Activated CD8-positive, alpha-beta T cell treated with anti-CD3 and anti-CD28 coated beads, Interleukin-2, amount 10 ng/mL, durations not matched to agents 7 days and 5 days (primary cell): ENCODE measurements at regions of chr4 and their contacts with region 1.

Region 1: GRCh38 chr4:36399762-36400353 is 118.4 kb downstream of the DTHD1 start:
- DNase-seq: peak; percentile 66
- ATAC-seq: peak; percentile 51
- H3K4me3 Mint-ChIP-seq: no peak overlapping the region
- H3K27ac Mint-ChIP-seq: no peak overlapping the region
- H3K4me1 Mint-ChIP-seq: no peaks in the 10 kb centered on the region
- H3K27me3 Mint-ChIP-seq: peaks cover 15% of the 10 kb centered on the region

Region 2: DNA sequence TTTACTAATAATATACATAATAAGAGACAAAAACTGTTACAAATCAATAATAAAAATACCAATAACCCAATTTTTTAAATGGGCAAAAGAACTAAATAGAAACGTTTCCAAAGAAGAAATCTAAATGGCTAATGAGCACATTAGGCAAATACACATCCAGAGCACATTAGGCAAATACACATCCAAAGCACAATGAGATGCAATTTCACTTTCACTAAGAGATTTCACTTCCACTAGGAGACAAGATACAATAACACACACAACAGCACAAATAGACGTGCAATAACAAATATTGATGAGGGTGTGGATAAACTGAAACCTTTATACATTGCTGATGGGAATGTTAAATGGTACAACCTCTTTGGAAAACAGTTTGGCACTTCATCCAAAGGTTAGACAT is 406.3 kb before region 1 on chr4:
- CTCF ChIA-PET with region 1: no interaction called
- POLR2A ChIA-PET with region 1: no interaction called
- DNase-seq: no peak
- ATAC-seq: no peak
- H3K4me3 Mint-ChIP-seq: no peak overlapping the region
- H3K27ac Mint-ChIP-seq: no peak overlapping the region
- H3K4me1 Mint-ChIP-seq: no peaks in the 10 kb centered on the region
- H3K27me3 Mint-ChIP-seq: no peaks in the 10 kb centered on the region

Region 3: DNA sequence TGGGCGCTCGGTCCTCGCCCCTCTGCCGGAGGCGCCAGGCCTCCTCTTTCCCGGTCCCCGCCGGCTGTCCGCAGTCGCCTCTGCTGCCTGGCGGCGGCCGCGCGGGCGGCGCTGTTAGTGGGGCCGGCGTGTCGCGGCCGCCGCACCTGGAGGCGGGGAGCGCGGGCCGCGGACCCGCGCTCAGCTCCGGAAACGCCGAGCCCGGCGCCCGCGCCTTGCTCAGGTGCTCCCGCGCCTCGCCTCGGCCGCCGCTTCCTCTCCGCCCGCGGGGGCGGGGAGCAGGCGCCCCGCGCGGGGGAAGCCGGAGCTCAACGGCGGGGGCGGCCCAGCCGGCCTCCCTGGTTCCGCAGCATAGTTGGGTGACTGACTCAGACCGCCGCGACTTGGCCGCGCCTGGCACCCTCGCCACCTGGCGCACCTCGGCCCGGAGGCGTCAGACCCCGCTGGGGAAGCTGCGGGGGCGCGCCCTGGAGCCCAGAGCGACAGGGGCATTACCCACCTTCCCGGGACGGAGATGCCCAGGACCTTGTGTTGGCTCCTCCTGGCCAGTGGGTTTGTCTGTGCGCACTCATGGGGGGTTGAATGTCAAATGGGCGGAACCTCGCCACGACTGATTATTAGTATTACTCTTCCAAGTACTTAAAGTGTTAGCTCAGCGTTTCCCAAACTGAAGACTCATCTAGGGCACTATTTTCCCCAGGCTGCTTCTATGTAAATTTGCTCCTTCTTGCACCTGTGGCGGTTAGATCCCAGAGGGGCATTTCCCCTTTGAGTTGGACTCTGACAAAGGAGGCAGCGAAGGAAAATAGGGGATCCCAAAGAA is 155.4 kb before region 1 on chr4 and contains the start of gene ARAP2:
- CTCF ChIA-PET with region 1: interaction called, 34 read pairs
- POLR2A ChIA-PET with region 1: interaction called, 4 read pairs
- DNase-seq: peak; percentile 74
- ATAC-seq: peak; percentile 80
- H3K4me3 Mint-ChIP-seq: peak within 1 kb of the TSS; percentile 84
- H3K27ac Mint-ChIP-seq: peak within 1 kb of the TSS; percentile 85
- H3K4me1 Mint-ChIP-seq: peaks cover 31% of the 10 kb centered on the region
- H3K27me3 Mint-ChIP-seq: no peaks in the 10 kb centered on the region
- total RNA-seq, gene ARAP2: 34.7 to 35.5 TPM

Region 4: DNA sequence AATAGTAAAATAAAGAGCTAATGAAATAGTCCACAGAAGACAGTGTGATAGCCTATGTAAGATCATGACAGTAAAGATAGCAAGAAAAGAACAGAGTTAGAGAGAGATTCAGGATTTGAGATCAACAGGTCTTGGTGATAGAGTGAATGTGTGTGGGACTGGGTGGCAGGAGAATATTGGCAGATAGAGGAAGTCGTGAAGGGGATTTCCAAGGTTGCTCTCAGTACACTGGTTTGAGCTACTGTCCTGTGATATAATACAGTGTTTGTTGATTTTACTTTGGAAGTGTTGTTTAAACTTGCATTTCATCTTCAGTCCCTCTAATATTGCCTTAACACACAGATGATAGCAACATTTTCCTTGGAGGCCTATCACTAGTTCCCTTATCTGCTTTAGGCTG is 74.4 kb before region 1 on chr4:
- CTCF ChIA-PET with region 1: interaction called, 11 read pairs
- POLR2A ChIA-PET with region 1: no interaction called
- DNase-seq: no peak
- ATAC-seq: peak; percentile 32
- H3K4me3 Mint-ChIP-seq: no peak overlapping the region
- H3K27ac Mint-ChIP-seq: peak overlapping the region; percentile 5
- H3K4me1 Mint-ChIP-seq: peaks cover 60% of the 10 kb centered on the region
- H3K27me3 Mint-ChIP-seq: no peaks in the 10 kb centered on the region

Region 5: DNA sequence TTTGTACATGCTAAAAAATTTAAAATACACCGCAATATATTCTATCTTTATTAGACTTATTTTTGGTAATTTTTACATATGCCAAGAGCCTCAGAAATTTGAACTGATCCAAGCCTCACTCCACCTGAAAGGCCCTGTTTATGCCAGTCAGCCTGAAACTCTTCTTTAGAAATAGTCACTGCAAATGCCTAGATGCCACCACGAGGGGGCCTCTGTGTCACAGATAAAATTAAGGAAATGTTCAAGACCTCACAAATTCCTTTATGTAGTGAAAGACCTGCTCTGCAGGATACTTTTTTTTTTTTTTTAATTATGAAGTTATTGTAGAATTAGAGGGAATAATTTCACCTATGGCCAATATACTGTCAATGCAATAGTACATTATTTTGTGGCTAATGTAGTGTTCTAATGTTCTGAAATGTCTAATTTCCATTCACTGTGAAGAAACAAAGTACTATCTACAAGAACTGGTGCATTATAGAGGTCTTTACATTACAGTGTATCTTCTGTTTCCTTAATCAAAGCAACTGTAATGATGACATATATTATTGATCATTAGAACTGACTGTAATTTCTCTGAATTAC is 48.7 kb before region 1 on chr4:
- CTCF ChIA-PET with region 1: interaction called, 123 read pairs
- POLR2A ChIA-PET with region 1: interaction called, 3 read pairs
- DNase-seq: peak; percentile 85
- ATAC-seq: peak; percentile 69
- H3K4me3 Mint-ChIP-seq: no peak overlapping the region
- H3K27ac Mint-ChIP-seq: no peak overlapping the region
- H3K4me1 Mint-ChIP-seq: peaks cover 24% of the 10 kb centered on the region
- H3K27me3 Mint-ChIP-seq: peaks cover 3% of the 10 kb centered on the region

Region 6: GRCh38 chr4:36374836-36375401 is 24.9 kb before region 1 on chr4:
- CTCF ChIA-PET with region 1: interaction called, 11 read pairs
- POLR2A ChIA-PET with region 1: no interaction called
- DNase-seq: no peak
- ATAC-seq: no peak
- H3K4me3 Mint-ChIP-seq: no peak overlapping the region
- H3K27ac Mint-ChIP-seq: no peak overlapping the region
- H3K4me1 Mint-ChIP-seq: no peaks in the 10 kb centered on the region
- H3K27me3 Mint-ChIP-seq: no peaks in the 10 kb centered on the region

Region 7: GRCh38 chr4:36420111-36420679 is 20.3 kb after region 1 on chr4:
- CTCF ChIA-PET with region 1: no interaction called
- POLR2A ChIA-PET with region 1: no interaction called
- DNase-seq: no peak
- ATAC-seq: no peak
- H3K4me3 Mint-ChIP-seq: no peak overlapping the region
- H3K27ac Mint-ChIP-seq: no peak overlapping the region
- H3K4me1 Mint-ChIP-seq: no peaks in the 10 kb centered on the region
- H3K27me3 Mint-ChIP-seq: peaks cover 21% of the 10 kb centered on the region

Region 8: GRCh38 chr4:36471903-36472302 is 72.0 kb after region 1 on chr4:
- CTCF ChIA-PET with region 1: no interaction called
- POLR2A ChIA-PET with region 1: no interaction called
- DNase-seq: no peak
- ATAC-seq: no peak
- H3K4me3 Mint-ChIP-seq: no peak overlapping the region
- H3K27ac Mint-ChIP-seq: no peak overlapping the region
- H3K4me1 Mint-ChIP-seq: no peaks in the 10 kb centered on the region
- H3K27me3 Mint-ChIP-seq: peaks cover 3% of the 10 kb centered on the region